Activated naive CD4-positive, alpha-beta T cell treated with anti-CD3 and anti-CD28 coated beads for 36 hours (primary cell): ENCODE measurements at regions of chr9 and their contacts with region 1.

Region 1: DNA sequence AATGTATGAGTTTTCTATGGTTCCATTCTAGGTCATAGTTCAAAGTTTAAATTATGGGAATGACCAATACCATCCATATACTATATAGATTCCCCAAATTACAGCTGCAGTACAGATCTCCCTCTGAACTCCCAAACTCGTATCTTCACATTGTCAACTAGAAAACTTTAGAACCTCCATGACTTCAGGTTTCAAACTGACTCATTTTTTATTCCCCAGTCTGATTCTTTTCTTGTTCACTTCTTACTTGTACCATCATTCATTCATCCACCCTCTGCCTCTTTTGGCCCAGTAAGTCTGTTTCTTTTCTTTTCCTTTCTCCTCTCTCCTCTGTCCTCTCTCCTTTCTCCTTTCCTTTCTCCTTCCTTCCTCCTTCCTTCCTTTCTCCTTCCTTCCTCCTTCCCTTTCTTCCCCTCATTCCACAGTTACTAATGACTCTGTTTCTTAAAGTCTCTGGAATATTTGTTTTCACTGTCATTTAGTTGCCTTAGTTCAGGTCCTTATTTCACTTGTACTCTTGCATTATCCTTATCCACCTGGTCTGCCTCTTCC is 30.6 kb downstream of the RAD23B start:
- DNase-seq: no peak
- H3K4me3 Mint-ChIP-seq: no peak overlapping the region
- H3K27ac Mint-ChIP-seq: peak overlapping the region; percentile 64
- H3K4me1 Mint-ChIP-seq: peaks cover 67% of the 10 kb centered on the region
- H3K27me3 Mint-ChIP-seq: no peaks in the 10 kb centered on the region

Region 2: GRCh38 chr9:106637486-106637885 is 676.1 kb before region 1 on chr9:
- CTCF ChIA-PET with region 1: no interaction called
- intact Hi-C with region 1: no loop called
- DNase-seq: no peak
- H3K4me3 Mint-ChIP-seq: no peak overlapping the region
- H3K27ac Mint-ChIP-seq: no peak overlapping the region
- H3K4me1 Mint-ChIP-seq: no peaks in the 10 kb centered on the region
- H3K27me3 Mint-ChIP-seq: no peaks in the 10 kb centered on the region

Region 3: GRCh38 chr9:107332883-107333282 is 19.3 kb after region 1 on chr9:
- CTCF ChIA-PET with region 1: no interaction called
- intact Hi-C with region 1: loop called (anchors 2 kb)
- DNase-seq: no peak
- H3K4me3 Mint-ChIP-seq: no peak overlapping the region
- H3K27ac Mint-ChIP-seq: no peak overlapping the region
- H3K4me1 Mint-ChIP-seq: no peaks in the 10 kb centered on the region
- H3K27me3 Mint-ChIP-seq: no peaks in the 10 kb centered on the region

Region 4: GRCh38 chr9:107359001-107359451 is 45.4 kb after region 1 on chr9:
- CTCF ChIA-PET with region 1: no interaction called
- intact Hi-C with region 1: no loop called
- DNase-seq: no peak
- H3K4me3 Mint-ChIP-seq: no peak overlapping the region
- H3K27ac Mint-ChIP-seq: no peak overlapping the region
- H3K4me1 Mint-ChIP-seq: no peaks in the 10 kb centered on the region
- H3K27me3 Mint-ChIP-seq: peaks cover 9% of the 10 kb centered on the region